ENCODE measurements at regions of chr1 and their contacts with region 1.

Region 1: GRCh38 chr1:115976062-115976920 is at the start of gene SLC22A15:
- DNase-seq: peak; percentile 93

Region 2: DNA sequence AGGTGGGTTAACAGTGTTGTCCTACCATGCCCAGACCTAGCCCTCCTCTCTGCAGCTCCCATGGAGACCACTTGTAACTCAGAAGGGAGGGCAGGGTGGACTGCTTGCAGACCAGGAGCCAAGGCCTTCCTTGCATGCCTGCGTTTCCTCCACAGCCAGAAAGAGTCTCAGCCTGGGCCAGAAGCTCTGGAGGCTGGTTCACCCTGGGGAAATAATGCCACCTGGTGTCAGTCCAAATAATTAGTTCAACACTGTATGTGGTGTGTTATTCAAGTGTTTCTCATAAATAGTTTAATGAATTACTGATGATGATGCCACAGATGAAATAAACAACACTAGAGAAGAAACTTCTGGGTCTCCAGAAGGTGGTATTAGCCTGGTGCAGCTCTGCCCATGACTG is 351.4 kb before region 1 on chr1:
- in situ Hi-C with region 1: loop called (anchors 25 kb)
- DNase-seq: no peak

Region 3: DNA sequence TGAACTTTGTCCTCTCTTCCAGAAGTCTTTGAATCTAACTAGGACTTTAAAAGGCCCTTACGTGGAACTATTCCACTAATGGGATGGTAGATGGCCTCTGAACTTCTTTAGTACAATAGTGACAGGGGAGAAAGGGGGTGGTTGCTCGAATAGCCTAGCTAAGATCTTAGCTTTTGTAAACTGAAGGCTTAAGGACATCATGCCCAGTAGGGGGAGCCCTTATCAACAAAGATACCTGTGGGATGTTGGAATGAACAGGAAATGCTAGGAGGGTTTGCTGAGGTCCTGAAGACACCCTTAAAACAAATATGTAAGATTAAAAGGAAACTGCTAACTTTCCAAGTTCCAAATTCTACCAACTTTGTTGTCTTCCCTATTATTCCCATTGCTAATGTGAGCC is 168.6 kb before region 1 on chr1:
- in situ Hi-C with region 1: loop called (anchors 25 kb)
- DNase-seq: peak; percentile 73

Region 4: DNA sequence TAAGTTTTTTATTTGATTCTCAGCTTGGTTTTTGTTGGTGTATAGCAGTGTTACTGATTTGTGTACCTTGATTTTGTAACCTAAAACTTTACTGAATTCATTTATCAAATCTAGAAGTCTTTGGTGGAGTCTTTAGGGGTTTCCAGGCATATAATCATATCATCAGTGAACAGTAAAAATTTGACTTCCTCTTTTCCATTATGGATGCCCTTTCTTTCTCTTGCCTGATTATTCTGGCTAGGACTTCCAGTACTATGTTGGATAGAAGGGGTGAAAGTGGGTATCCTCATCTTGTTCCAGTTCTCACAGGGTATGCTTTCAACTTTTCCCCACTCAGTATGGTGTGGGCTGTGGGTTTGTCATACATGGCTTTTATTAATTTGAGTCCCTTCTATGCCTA is 111.3 kb after region 1 on chr1:
- in situ Hi-C with region 1: no loop called
- DNase-seq: peak; percentile 19